ENCODE measurements at regions of chr6 and their contacts with region 1.

Region 1: DNA sequence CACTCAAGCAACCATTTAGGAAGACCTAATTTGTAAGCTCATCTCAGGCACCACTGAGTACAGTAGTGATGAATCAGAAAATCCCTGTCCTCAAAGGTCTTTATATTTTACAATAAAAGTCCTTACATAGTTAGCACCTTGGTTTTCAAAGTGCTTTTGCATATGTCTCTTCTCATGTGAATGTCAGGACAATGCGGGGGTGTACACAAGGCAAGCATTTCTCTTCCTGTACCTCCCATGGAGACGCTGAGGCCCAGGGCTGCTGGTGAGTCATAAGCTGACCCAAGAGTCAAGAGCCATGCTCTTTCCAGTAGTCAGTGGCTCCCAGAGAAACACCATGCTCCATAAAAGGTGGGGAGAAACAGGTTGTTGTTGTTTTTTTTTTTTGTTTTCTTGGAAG is 174.0 kb downstream of the GJA10 start:
- DNase-seq: no peak
- H3K4me3 Mint-ChIP-seq: peak overlapping the region; percentile 57
- H3K27ac Mint-ChIP-seq: peak overlapping the region; percentile 81
- H3K4me1 Mint-ChIP-seq: peaks cover 72% of the 10 kb centered on the region
- H3K27me3 Mint-ChIP-seq: no peaks in the 10 kb centered on the region

Region 2: GRCh38 chr6:90044833-90045381 is 23.4 kb before region 1 on chr6:
- intact Hi-C with region 1: loop called (anchors 1 kb)
- DNase-seq: peak; percentile 53
- H3K4me3 Mint-ChIP-seq: no peak overlapping the region
- H3K27ac Mint-ChIP-seq: no peak overlapping the region
- H3K4me1 Mint-ChIP-seq: peaks cover 26% of the 10 kb centered on the region
- H3K27me3 Mint-ChIP-seq: no peaks in the 10 kb centered on the region

Measured in activated CD4-positive, alpha-beta T cell treated with anti-CD3 and anti-CD28 coated beads, Interleukin-2, amount 10 ng/mL, durations not matched to agents 24 days and 14 days (primary cell).